CD4-positive, alpha-beta memory T cell (primary cell): ENCODE measurements at regions of chr14 and their contacts with region 1.

Region 1: GRCh38 chr14:23076785-23077408 is 18.0 kb downstream of the ACIN1 start:
- DNase-seq: peak in 4 of 5 donors; percentile 25 to 42 (median 38)
- H3K4me3 ChIP-seq: no peak overlapping the region
- H3K4me3 Mint-ChIP-seq: no peak overlapping the region
- H3K27ac ChIP-seq: no peak overlapping the region
- H3K27ac Mint-ChIP-seq: peak overlapping the region in 3 of 7 donors; percentile 16 to 70 (median 57)
- H3K4me1 ChIP-seq: peaks cover 5% of the 10 kb centered on the region
- H3K4me1 Mint-ChIP-seq: peaks cover 6 to 15% (median 10%) of the 10 kb centered on the region in 4 donors
- H3K27me3 ChIP-seq: no peaks in the 10 kb centered on the region
- H3K27me3 Mint-ChIP-seq: no peaks in the 10 kb centered on the region

Region 2: GRCh38 chr14:22159099-22159498 is 917.8 kb before region 1 on chr14:
- CTCF ChIA-PET with region 1: no interaction called
- POLR2A ChIA-PET with region 1: no interaction called
- intact Hi-C with region 1: no loop called
- DNase-seq: no peak
- H3K4me3 ChIP-seq: no peak overlapping the region
- H3K4me3 Mint-ChIP-seq: peak overlapping the region in 3 of 8 donors; percentile 10 to 16 (median 12)
- H3K27ac ChIP-seq: no peak overlapping the region
- H3K27ac Mint-ChIP-seq: peak overlapping the region in 1 of 7 donors; percentile 57
- H3K4me1 ChIP-seq: no peaks in the 10 kb centered on the region
- H3K4me1 Mint-ChIP-seq: peaks cover 0 to 12% (median 3%) of the 10 kb centered on the region in 4 donors
- H3K27me3 ChIP-seq: no peaks in the 10 kb centered on the region
- H3K27me3 Mint-ChIP-seq: no peaks in the 10 kb centered on the region

Region 3: GRCh38 chr14:23089498-23090253 is 12.8 kb after region 1 on chr14:
- CTCF ChIA-PET with region 1: interaction called, 37 read pairs
- POLR2A ChIA-PET with region 1: interaction called, 29 read pairs
- intact Hi-C with region 1: no loop called
- DNase-seq: no peak
- H3K4me3 ChIP-seq: no peak overlapping the region
- H3K4me3 Mint-ChIP-seq: peak overlapping the region in 1 of 8 donors; percentile 3
- H3K27ac ChIP-seq: no peak overlapping the region
- H3K27ac Mint-ChIP-seq: peak overlapping the region in 1 of 7 donors; percentile 14
- H3K4me1 ChIP-seq: peaks cover 29% of the 10 kb centered on the region
- H3K4me1 Mint-ChIP-seq: peaks cover 29 to 50% (median 33%) of the 10 kb centered on the region in 4 donors
- H3K27me3 ChIP-seq: no peaks in the 10 kb centered on the region
- H3K27me3 Mint-ChIP-seq: no peaks in the 10 kb centered on the region

Region 4: GRCh38 chr14:23186913-23187654 is 110.2 kb after region 1 on chr14:
- CTCF ChIA-PET with region 1: interaction called, 9 read pairs
- POLR2A ChIA-PET with region 1: no interaction called
- intact Hi-C with region 1: loop called (anchors 1 kb)
- DNase-seq: peak in 3 of 5 donors; percentile 22 to 33 (median 29)
- H3K4me3 ChIP-seq: no peak overlapping the region
- H3K4me3 Mint-ChIP-seq: no peak overlapping the region
- H3K27ac ChIP-seq: no peak overlapping the region
- H3K27ac Mint-ChIP-seq: no peak overlapping the region
- H3K4me1 ChIP-seq: peaks cover 12% of the 10 kb centered on the region
- H3K4me1 Mint-ChIP-seq: peaks cover 0 to 3% (median 0%) of the 10 kb centered on the region in 4 donors
- H3K27me3 ChIP-seq: peaks cover 8% of the 10 kb centered on the region
- H3K27me3 Mint-ChIP-seq: peaks cover 0 to 7% of the 10 kb centered on the region in 2 donors